ENCODE measurements at regions of chr6 and their contacts with region 1.

Region 1: DNA sequence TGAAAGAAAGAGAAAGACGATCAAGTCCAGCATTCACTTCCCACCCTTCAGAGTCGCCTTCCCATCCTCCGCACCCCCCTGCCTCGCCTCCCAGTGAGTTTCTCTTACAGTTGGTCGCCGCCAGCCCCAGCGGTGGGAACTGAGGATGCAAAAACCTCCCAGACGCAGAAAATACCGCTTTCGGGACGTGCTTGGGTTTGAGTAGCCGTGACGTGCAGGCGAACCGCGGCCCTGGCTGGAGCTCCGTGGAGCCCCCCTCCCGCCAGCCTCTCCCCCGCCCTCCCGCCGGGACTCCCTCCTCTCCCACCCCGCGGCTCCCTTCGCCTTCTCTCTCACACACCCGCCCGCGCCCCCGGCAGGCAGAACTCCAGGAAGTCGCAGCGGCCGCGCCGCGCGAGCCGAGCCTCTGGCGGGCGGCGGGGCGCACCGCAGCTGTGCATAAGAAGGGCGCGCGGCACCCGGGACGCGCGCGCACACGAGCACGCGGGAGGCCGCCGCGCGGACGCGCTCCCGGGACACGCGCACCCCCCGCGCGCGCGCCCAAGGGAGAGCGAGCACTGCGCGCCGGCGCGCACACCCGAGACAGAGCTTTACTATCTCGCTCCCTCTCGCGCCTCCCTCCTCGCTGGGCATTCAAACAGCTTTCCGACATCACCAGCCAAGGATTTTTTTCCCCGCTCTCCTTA is at the start of gene ADGRB3:
- DNase-seq: peak; percentile 68
- H3K4me3 ChIP-seq: peak within 1 kb of the TSS; percentile 51 to 55
- H3K27ac ChIP-seq: peak within 1 kb of the TSS; percentile 56 to 64
- H3K4me1 ChIP-seq: no peaks in the 10 kb centered on the region
- H3K27me3 ChIP-seq: no peaks in the 10 kb centered on the region
- CTCF ChIP-seq: peak in 1 of 4 experiments; percentile 17
- POLR2A ChIP-seq: no peak
- total RNA-seq, gene ADGRB3: 0.59 to 3.1 TPM

Region 2: GRCh38 chr6:68778356-68779020 is 143.6 kb after region 1 on chr6:
- intact Hi-C with region 1: loop called (anchors 5 kb)
- DNase-seq: no peak
- H3K4me3 ChIP-seq: no peak overlapping the region
- H3K27ac ChIP-seq: no peak overlapping the region
- H3K4me1 ChIP-seq: no peaks in the 10 kb centered on the region
- H3K27me3 ChIP-seq: no peaks in the 10 kb centered on the region
- CTCF ChIP-seq: peak in 1 of 4 experiments; percentile 10
- POLR2A ChIP-seq: no peak